Activated naive CD4-positive, alpha-beta T cell treated with anti-CD3 and anti-CD28 coated beads for 36 hours (primary cell): ENCODE measurements at regions of chr11 and their contacts with region 1.

Region 1: DNA sequence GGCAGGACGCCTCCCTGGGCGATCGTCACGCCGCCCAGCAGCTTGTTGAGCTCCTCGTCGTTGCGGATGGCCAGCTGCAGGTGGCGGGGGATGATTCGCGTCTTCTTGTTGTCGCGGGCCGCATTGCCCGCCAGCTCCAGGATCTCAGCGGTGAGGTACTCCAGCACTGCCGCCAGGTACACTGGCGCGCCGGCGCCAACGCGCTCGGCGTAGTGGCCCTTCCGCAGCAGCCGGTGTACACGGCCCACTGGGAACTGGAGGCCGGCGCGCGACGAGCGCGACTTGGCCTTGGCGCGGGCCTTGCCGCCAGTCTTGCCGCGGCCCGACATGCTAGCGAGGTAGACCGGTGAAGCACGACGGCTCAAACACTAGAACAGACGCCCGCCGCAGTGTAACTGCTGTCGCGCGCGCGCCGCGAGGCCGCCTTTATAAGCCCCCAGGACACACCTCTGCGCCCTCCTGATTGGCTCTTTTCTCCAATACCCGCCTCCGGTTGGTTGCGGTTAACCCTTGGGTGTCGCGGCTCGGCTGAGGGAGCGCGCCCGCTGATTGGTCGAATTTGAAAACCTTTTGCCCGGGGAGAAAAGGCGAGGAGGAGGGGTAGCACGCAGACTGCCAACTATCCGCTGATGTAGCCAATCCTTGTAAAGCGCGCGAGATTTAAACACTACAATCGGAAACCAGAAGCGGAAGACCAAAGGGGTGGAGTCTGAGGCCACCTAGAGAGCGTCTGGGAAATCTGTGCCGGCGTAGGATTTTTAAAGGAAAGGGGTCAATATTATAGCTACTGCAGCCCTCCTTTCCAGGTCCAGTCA is 6.4 kb downstream of the DPAGT1 start:
- DNase-seq: peak; percentile 100
- H3K4me3 Mint-ChIP-seq: peak overlapping the region; percentile 92
- H3K27ac Mint-ChIP-seq: peak overlapping the region; percentile 96
- H3K4me1 Mint-ChIP-seq: peaks cover 39% of the 10 kb centered on the region
- H3K27me3 Mint-ChIP-seq: no peaks in the 10 kb centered on the region

Region 2: DNA sequence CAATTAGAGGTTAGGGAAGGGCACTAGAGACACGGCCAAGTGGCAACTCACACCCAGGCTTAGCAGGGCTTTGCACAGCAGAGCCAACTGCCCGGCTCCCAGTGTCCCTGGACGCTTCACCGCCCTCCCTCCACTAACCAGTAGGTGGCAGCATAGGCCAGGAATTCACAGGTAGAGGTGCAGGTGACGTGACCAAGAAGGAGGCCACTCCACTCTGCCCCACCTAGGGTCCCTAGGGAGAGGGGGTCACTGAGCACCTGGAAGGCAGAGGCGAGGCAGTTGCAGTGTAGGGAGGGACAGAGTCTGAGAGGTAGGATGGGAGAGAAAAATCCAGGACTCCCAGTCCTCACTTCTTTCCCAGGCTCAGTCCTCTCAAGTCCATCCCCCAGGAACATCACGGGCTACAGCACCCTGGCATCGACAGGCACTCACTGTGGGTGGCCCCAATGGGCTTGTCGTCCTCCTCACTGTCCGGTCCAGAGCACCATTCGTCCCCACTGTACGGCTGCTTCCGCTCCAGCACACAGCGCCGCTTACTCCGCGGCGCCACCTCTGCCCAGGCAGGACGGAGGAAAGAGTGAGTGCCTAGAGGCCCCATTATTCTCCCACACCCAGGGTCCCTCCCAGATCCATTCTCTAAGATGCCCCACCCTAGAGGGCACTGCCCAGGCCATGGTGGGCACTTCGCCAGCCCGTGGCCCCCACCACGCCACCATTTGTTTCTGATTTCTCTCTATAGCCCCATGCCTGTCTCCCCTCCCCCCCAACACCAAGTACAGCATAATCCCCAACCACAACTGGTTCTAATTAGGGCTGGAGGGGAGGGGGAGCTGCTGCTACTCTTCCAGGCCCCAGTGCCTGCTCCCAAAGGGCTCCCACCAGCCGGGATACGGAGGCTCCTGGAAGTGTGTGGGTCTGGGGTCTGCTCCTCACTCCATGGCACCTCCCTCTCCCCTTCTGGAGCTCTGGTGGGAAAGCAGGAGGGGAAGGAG is 187.9 kb before region 1 on chr11:
- CTCF ChIA-PET with region 1: no interaction called
- intact Hi-C with region 1: loop called (anchors 5 kb)
- DNase-seq: peak; percentile 96
- H3K4me3 Mint-ChIP-seq: no peak overlapping the region
- H3K27ac Mint-ChIP-seq: peak overlapping the region; percentile 80
- H3K4me1 Mint-ChIP-seq: peaks cover 45% of the 10 kb centered on the region
- H3K27me3 Mint-ChIP-seq: no peaks in the 10 kb centered on the region

Region 3: GRCh38 chr11:118997627-118998387 is 97.5 kb before region 1 on chr11 and contains the start of gene CENATAC:
- CTCF ChIA-PET with region 1: no interaction called
- intact Hi-C with region 1: loop called (anchors 1 kb)
- DNase-seq: peak; percentile 98
- H3K4me3 Mint-ChIP-seq: peak within 1 kb of the TSS; percentile 88
- H3K27ac Mint-ChIP-seq: peak within 1 kb of the TSS; percentile 96
- H3K4me1 Mint-ChIP-seq: peaks cover 33% of the 10 kb centered on the region
- H3K27me3 Mint-ChIP-seq: no peaks in the 10 kb centered on the region
- total RNA-seq, gene CENATAC: 17.4 to 18.0 TPM

Region 4: DNA sequence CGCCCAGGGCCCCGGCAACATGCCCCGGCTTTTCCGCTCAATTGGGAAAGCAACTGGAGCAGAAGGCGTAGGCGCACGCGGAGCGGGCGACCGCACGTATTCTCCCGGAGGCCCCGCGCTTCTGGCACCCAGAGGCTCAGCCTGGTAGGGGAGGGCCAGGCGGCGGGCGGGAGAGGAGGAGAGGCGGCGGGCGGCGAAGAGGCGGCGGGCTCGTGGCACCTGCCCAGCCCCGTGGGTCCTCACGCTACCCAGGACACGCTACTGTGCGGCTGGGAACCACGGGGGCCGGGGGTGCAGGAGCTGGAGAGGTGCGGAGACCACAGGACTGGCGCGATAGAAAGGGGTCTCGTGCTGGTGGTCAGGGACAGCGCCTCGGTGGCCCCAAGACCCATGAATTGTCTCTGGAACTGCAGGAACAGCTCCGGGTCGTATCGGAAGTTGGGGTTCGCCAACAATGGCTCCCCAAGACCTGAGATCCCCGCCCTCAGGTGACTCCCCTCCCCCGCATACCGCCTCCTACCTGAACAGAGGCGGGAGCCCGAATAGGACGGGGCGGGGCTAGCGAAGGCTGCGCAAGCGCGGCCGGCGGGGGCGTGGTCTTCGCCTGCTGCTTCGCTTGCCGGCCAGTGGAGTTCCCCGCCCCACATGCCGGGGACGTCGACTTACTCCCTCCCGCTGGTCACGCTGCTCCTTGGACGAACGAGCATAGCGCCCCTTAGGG is 64.8 kb before region 1 on chr11 and contains the start of gene SLC37A4:
- CTCF ChIA-PET with region 1: no interaction called
- intact Hi-C with region 1: loop called (anchors 1 kb)
- DNase-seq: peak; percentile 99
- H3K4me3 Mint-ChIP-seq: peak within 1 kb of the TSS; percentile 77
- H3K27ac Mint-ChIP-seq: peak within 1 kb of the TSS; percentile 85
- H3K4me1 Mint-ChIP-seq: peaks cover 23% of the 10 kb centered on the region
- H3K27me3 Mint-ChIP-seq: no peaks in the 10 kb centered on the region
- total RNA-seq, gene SLC37A4: 28.3 to 30.3 TPM

Region 5: GRCh38 chr11:119067371-119068222 is 27.7 kb before region 1 on chr11 and contains the start of gene VPS11:
- CTCF ChIA-PET with region 1: interaction called, 3 read pairs
- intact Hi-C with region 1: loop called (anchors 1 kb)
- DNase-seq: peak; percentile 99
- H3K4me3 Mint-ChIP-seq: peak within 1 kb of the TSS; percentile 91
- H3K27ac Mint-ChIP-seq: peak within 1 kb of the TSS; percentile 96
- H3K4me1 Mint-ChIP-seq: peaks cover 37% of the 10 kb centered on the region
- H3K27me3 Mint-ChIP-seq: no peaks in the 10 kb centered on the region
- total RNA-seq, gene VPS11: 16.9 to 19.5 TPM

Region 6: GRCh38 chr11:119121008-119121810 is 25.9 kb after region 1 on chr11 and contains the start of gene HINFP:
- CTCF ChIA-PET with region 1: interaction called, 4 read pairs
- intact Hi-C with region 1: loop called (anchors 1 kb)
- DNase-seq: peak; percentile 100
- H3K4me3 Mint-ChIP-seq: peak within 1 kb of the TSS; percentile 97
- H3K27ac Mint-ChIP-seq: peak within 1 kb of the TSS; percentile 80
- H3K4me1 Mint-ChIP-seq: peaks cover 27% of the 10 kb centered on the region
- H3K27me3 Mint-ChIP-seq: no peaks in the 10 kb centered on the region
- total RNA-seq, gene HINFP: 24.5 to 25.2 TPM

Region 7: GRCh38 chr11:119334174-119334930 is 239.1 kb after region 1 on chr11 and contains the start of gene RNF26:
- CTCF ChIA-PET with region 1: no interaction called
- intact Hi-C with region 1: loop called (anchors 1 kb)
- DNase-seq: peak; percentile 98
- H3K4me3 Mint-ChIP-seq: peak within 1 kb of the TSS; percentile 93
- H3K27ac Mint-ChIP-seq: peak within 1 kb of the TSS; percentile 91
- H3K4me1 Mint-ChIP-seq: peaks cover 31% of the 10 kb centered on the region
- H3K27me3 Mint-ChIP-seq: peaks cover 5% of the 10 kb centered on the region
- total RNA-seq, gene RNF26: 46.1 to 47.0 TPM